Brain microvascular endothelial cell (primary cell): ENCODE measurements at regions of chr4 and their contacts with region 1.

Region 1: DNA sequence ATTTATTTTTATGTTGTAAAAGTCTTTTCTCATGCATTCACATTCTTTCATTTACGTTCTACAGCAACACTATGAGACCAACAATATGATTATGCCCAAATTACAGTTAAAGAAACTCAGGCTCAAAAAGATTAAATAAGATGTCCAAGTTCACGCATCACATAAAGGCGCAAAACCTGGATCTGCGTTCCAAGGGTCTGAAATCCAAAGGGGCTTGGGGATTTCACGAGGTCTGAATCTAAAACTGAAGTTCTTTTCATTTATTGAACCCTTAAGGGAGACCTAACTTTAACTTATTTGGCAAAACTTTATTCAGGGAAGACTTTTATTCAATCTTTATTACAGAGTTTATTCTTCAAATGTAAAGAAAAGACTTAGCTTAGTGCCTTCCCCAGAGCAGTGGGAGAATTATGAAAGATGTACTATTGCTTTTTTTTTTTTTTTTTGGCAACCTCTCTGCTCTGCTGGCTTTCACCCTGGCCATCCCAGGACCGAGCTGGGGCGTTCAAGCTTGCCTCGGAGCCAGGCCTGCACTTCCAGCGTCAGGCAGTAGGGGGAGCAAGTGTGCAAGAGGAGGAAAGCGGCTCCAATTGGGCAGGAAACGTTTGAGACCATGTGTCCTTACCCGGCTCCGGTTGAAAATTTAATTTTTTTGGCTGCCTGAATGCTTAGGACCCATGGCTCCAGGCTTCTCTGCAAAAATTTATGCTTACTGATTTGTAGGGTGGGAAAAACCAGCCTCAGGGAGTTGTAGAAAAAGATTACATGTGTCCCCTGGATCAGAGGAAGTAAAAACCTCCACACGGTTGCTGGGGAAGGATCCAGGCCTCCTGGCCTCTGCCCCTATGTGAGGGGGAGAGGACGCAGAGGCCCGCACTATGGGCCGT is 344.3 kb upstream of the KLF3 start:
- DNase-seq: peak; percentile 85
- H3K4me3 ChIP-seq: no peak overlapping the region
- H3K27ac ChIP-seq: peak overlapping the region; percentile 81
- H3K27me3 ChIP-seq: no peaks in the 10 kb centered on the region
- CTCF ChIP-seq: peak; percentile 98

Region 2: GRCh38 chr4:38062088-38062893 is 257.4 kb before region 1 on chr4:
- in situ Hi-C with region 1: loop called (anchors 25 kb)
- DNase-seq: peak; percentile 76
- H3K4me3 ChIP-seq: peak overlapping the region; percentile 37
- H3K27ac ChIP-seq: peak overlapping the region; percentile 56
- H3K27me3 ChIP-seq: no peaks in the 10 kb centered on the region
- CTCF ChIP-seq: peak; percentile 84

Region 3: GRCh38 chr4:38413524-38414341 is 94.0 kb after region 1 on chr4:
- in situ Hi-C with region 1: no loop called
- DNase-seq: no peak
- H3K4me3 ChIP-seq: no peak overlapping the region
- H3K27ac ChIP-seq: no peak overlapping the region
- H3K27me3 ChIP-seq: no peaks in the 10 kb centered on the region
- CTCF ChIP-seq: no peak

Region 4: DNA sequence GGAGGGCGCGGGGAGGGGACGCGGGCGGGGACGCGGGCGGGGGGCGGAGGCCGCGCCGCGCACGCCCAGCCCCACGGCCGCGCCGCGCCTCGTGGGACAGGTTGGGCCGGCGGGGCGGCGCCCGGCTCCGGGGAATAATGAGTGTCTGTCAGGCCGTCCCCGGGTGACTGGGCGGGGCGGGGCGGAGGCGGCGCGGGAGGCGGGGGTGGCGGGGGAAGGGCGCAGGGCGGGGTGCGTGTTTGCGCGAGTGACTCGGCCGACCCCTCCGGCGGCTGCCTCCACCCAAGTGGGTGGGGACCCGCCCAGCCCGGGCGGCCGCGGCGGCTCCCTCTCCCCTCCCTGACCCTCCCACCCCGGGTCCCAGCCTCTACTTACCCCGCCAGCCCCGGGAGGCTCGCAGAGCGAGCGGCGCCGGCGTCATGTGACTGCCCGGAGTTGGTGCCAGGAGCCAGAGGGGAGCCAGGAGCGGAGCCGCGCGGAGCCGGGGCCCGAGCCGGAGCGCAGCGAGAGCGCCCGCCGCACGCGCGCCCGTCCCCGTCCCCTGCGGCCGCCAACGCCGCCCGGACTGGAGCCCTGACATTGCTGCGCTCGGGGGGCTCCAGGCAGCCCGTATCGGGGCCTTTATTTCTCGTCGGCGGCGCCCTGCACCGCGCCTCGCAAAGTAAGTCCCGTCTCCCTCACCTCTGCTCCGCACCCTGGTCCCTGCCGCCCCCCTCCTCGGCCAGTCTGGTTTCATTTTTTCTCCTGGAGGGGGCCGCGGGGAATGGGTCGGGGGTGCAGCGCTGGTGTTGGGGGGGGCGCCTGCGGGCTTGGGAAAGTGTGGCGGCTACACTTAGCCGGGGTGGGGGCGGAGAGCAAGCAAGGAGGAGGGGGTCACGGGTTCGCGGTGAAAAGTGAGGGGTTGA is 344.4 kb after region 1 on chr4 and contains the start of gene KLF3:
- in situ Hi-C with region 1: loop called (anchors 10 kb)
- DNase-seq: peak; percentile 82
- H3K4me3 ChIP-seq: peak within 1 kb of the TSS; percentile 83
- H3K27ac ChIP-seq: peak within 1 kb of the TSS; percentile 94
- H3K27me3 ChIP-seq: no peaks in the 10 kb centered on the region
- CTCF ChIP-seq: no peak